ENCODE measurements at regions of chr12 and their contacts with region 1.

Region 1: DNA sequence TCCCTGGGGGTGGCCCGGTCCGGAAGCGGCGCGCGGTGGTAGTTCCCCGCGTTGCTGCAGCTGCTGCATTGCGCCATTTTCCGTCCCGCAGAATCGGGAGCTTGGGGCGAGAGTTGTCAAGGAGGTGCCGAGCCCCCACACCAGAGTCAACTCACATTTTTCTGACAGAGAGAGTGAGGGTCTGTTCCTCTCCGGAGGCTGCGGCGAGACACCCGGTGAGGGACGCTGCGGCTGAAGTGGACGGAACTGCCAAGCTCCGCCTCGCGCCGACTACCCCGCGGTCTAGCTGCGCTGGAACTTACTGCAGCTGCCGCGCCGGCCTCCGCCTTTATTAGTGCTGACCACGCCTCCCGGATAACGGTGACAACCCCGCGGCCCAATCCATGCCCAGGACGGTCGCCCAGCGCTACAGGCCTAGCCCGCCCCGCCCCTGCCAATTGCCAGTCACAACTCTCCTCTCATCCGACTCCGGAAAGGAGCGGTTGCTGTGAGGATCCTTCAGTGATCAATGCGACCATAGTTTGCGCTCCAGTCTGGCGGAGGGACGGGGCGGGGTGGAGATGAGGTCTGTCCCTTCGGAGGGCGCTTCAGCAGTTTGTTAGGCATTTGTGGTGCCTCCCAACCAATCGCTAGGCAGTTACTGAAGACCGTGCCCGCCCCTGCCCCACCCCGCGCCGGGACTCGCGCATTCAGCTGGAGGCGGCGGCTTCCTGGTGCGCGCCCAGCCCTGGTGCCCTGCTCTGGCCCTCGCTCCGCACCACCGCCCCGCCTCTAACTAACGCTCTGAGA is at the start of gene VAMP1:
- DNase-seq: peak; percentile 95 to 97 (median 97)
- H3K4me3 ChIP-seq: peak within 1 kb of the TSS; percentile 66 to 90 (median 80)
- H3K27ac ChIP-seq: peak within 1 kb of the TSS in 1 of 2 experiments; percentile 71
- H3K4me1 ChIP-seq: peaks cover 4 to 24% (median 21%) of the 10 kb centered on the region in 4 experiments
- H3K27me3 ChIP-seq: no peaks in the 10 kb centered on the region

Region 2: DNA sequence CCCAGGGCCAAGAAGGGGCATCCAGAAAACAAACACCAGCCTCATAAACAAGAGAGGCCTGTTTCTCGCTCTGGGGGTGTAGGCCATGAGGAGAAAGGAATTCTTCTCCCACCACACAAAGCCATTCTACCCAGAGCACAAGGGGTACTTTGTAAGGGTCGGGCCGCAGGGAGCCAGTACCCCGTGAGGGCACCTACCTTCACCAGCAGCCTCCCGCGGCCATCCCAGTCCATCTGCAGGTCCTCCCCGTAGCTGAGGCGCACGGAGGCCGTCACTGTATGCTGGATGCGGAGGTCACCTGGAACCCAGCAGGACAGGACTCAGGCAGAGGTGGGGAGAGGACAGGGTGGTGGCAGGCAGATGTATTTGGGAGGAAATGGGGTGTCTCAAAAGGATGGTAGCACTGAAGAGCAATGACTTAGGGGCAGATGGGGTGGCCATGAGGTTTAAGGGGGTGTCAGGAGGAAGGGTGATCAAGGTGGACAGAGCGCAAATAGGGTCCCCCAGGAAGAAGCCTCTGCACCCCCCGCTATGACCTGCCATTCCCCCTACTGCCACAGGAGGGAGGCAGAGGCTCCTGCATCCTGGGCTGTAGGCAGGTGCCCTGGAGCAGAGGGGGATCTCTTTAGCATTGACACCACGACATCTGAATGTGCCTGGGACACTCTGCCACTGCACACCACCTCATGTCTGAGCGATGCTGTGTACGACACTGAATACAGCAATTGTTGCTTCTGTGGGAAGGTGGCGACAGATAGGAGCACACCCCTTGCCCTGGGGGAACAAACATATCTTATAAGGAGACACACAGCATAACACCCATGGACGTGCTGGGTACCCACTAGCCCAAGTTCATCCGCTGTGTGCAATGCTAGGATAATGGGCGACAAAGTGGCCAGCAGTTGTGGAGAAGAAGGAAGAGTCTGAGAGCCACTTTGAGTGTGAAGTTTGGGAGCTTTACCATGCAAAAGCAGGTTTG is 407.5 kb before region 1 on chr12:
- CTCF ChIA-PET with region 1: no interaction called
- POLR2A ChIA-PET with region 1: no interaction called
- DNase-seq: peak; percentile 67 to 84 (median 75)
- H3K4me3 ChIP-seq: no peak overlapping the region
- H3K27ac ChIP-seq: no peak overlapping the region
- H3K4me1 ChIP-seq: peaks cover 0 to 14% (median 7%) of the 10 kb centered on the region in 4 experiments
- H3K27me3 ChIP-seq: no peaks in the 10 kb centered on the region

Region 3: DNA sequence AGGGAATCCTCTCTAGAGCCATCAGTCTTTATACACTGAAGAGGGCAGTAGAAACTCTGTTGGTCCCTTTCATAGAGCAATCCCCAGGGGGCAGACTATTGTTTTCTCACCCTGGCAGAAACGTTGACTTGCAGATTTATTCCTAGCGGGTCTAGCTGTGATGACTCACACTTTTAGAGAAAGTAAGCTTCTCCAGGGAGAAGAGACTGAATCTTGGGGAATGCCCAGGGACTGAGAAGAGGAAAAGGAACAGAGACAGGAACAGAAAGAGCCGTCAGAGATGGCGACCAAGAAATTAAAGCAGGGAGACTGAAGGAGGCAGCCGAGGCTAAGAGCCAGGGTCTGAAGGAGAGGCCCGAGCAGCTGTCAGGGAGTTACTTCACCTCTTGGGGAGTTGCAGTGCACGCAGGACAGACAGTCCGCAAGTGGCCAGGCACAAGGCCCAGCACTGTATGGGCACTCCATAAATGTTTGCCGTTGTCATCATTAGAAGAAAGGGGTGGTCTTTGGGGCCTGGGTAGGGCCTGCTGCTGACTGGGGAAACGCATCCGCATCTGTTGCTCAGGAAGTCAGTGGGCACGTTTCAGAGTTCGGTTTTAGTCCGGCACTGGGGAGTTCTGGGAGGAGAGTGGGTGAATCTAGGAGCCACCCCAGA is 147.1 kb before region 1 on chr12:
- CTCF ChIA-PET with region 1: interaction called, 35 read pairs
- POLR2A ChIA-PET with region 1: interaction called, 6 read pairs
- DNase-seq: peak; percentile 82 to 87 (median 86)
- H3K4me3 ChIP-seq: peak overlapping the region in 5 of 7 experiments; percentile 12 to 64 (median 46)
- H3K27ac ChIP-seq: peak overlapping the region; percentile 37 to 68
- H3K4me1 ChIP-seq: peaks cover 12 to 56% (median 51%) of the 10 kb centered on the region in 4 experiments
- H3K27me3 ChIP-seq: no peaks in the 10 kb centered on the region

Region 4: GRCh38 chr12:6423267-6424007 is 47.1 kb before region 1 on chr12:
- CTCF ChIA-PET with region 1: interaction called, 197 read pairs
- POLR2A ChIA-PET with region 1: interaction called, 5 read pairs
- DNase-seq: peak; percentile 91 to 96 (median 95)
- H3K4me3 ChIP-seq: no peak overlapping the region
- H3K27ac ChIP-seq: no peak overlapping the region
- H3K4me1 ChIP-seq: peaks cover 0 to 39% (median 33%) of the 10 kb centered on the region in 4 experiments
- H3K27me3 ChIP-seq: no peaks in the 10 kb centered on the region

Region 5: GRCh38 chr12:6451348-6452244 is 19.0 kb before region 1 on chr12 and contains the start of gene TAPBPL:
- CTCF ChIA-PET with region 1: interaction called, 26 read pairs
- POLR2A ChIA-PET with region 1: interaction called, 3 read pairs
- DNase-seq: peak; percentile 78 to 92 (median 89)
- H3K4me3 ChIP-seq: peak within 1 kb of the TSS; percentile 64 to 98 (median 93)
- H3K27ac ChIP-seq: peak within 1 kb of the TSS; percentile 84 to 95
- H3K4me1 ChIP-seq: peaks cover 5 to 31% (median 28%) of the 10 kb centered on the region in 4 experiments
- H3K27me3 ChIP-seq: no peaks in the 10 kb centered on the region

Region 6: GRCh38 chr12:6493497-6494257 is 23.1 kb after region 1 on chr12 and contains the start of gene NCAPD2:
- CTCF ChIA-PET with region 1: interaction called, 12 read pairs
- POLR2A ChIA-PET with region 1: interaction called, 15 read pairs
- DNase-seq: peak; percentile 93 to 98 (median 97)
- H3K4me3 ChIP-seq: peak within 1 kb of the TSS; percentile 90 to 98 (median 95)
- H3K27ac ChIP-seq: peak within 1 kb of the TSS; percentile 93 to 94
- H3K4me1 ChIP-seq: peaks cover 21 to 30% (median 26%) of the 10 kb centered on the region in 4 experiments
- H3K27me3 ChIP-seq: no peaks in the 10 kb centered on the region

Region 7: GRCh38 chr12:6570264-6570887 is 99.8 kb after region 1 on chr12:
- CTCF ChIA-PET with region 1: no interaction called
- POLR2A ChIA-PET with region 1: no interaction called
- DNase-seq: peak; percentile 54 to 79 (median 77)
- H3K4me3 ChIP-seq: no peak overlapping the region
- H3K27ac ChIP-seq: no peak overlapping the region
- H3K4me1 ChIP-seq: peaks cover 7 to 19% (median 9%) of the 10 kb centered on the region in 4 experiments
- H3K27me3 ChIP-seq: no peaks in the 10 kb centered on the region